KBM-7 (cell line): ENCODE measurements at regions of chr7 and their contacts with region 1.

Region 1: GRCh38 chr7:140326116-140326928 is 72.0 kb downstream of the SLC37A3 start:
- DNase-seq: peak; percentile 66

Region 2: GRCh38 chr7:139620676-139621344 is 705.5 kb before region 1 on chr7:
- in situ Hi-C with region 1: loop called (anchors 25 kb)
- DNase-seq: peak; percentile 46

Region 3: GRCh38 chr7:140003913-140004382 is 322.4 kb before region 1 on chr7:
- in situ Hi-C with region 1: loop called (anchors 25 kb)
- DNase-seq: peak; percentile 76

Region 4: DNA sequence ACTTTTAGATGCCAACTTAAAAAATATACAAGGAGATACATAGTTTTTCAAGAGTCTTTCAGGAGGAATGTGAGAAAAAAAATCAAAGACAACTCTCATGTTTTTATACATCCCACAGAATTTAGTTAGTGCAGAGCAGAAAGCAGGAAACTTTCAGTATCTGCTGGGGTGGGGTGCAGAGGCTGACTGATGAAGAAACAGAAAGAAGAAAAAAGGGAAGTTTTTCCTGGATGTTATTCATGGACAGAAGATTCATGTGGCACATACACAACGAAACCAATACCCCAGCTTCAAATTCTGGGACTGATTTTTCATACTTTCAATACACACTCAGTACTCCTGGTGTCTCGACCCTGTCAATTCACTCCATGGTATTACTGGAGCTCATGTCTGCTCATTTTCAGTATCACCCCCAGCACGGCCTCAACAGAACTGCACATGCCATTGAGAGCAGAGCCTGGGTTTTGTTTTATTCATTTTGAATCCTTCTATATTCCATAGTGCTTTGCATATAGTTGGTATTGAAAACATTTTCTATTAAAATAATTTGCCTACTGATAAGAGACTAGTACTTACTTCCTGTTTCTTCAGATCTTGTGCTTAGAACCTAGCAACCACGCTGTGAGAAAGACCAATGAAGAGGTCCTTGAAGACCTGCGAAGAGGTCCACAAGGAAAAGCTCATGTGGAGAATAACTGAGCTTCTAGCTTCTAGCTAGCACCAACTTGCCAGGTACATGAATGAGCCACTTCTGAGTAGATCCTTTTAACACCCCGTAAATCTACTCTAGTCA is 419.1 kb after region 1 on chr7:
- in situ Hi-C with region 1: no loop called
- DNase-seq: peak; percentile 27